Esophagus muscularis mucosa (tissue), 4 donors: ENCODE measurements at regions of chr3 and their contacts with region 1.

Region 1: DNA sequence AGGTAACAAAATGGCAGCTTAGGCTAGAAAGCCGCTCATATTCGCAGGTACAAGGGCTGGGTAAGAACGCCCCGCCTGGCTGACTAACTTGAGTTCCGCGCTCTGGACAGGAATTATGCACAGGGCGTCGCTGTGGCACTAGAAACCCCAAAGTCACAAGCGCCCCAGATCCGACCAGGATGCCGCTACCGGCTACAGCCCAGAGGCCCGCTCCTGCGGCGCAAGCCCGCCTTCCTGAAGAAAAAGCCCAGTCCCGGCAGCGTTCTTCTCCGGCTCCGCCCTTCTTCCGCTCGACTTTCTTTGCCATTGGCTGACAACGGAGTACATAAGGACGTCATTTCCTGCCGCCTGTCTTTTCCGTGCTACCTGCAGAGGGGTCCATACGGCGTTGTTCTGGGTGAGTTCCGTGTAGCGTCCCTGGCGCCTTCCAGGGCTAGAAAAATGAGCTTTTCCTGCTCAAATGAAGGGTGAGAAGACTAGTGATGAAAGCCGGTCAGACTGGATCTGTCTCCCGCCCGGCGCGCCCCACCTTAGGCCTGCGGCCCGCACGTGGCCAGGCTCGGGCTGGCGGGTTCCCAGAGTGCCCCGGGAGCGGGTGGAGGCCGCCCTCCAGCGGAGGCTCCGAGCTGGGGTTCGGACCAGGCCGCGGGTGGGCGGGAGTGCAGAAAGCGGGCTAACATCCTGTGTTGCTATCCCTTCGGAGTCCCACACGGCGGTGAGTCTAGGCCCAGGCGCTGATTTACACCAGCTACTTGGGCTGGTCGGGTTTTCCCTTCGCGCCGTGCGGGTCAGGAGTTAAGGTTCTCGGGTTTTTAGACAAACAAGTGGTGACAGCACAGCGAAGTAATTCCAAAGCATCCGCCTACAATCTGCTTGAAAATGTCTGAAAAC is at the start of gene RPSA:
- DNase-seq: peak; percentile 98
- H3K4me3 ChIP-seq: peak within 1 kb of the TSS; percentile 65 to 77 (median 73)
- H3K27ac ChIP-seq: peak within 1 kb of the TSS; percentile 78 to 88 (median 82)
- H3K4me1 ChIP-seq: peaks cover 24 to 35% (median 32%) of the 10 kb centered on the region in 4 donors
- H3K27me3 ChIP-seq: no peaks in the 10 kb centered on the region
- CTCF ChIP-seq: peak; percentile 37 to 59 (median 49)
- EP300 ChIP-seq: no peak
- POLR2A ChIP-seq: peak; percentile 90
- total RNA-seq, gene RPSA: 720 to 1,054 (median 915) TPM

Region 2: GRCh38 chr3:39383881-39384664 is 22.5 kb before region 1 on chr3:
- intact Hi-C with region 1: loop called (anchors 1 kb)
- DNase-seq: peak; percentile 98
- H3K4me3 ChIP-seq: peak overlapping the region; percentile 76 to 90 (median 86)
- H3K27ac ChIP-seq: peak overlapping the region; percentile 93 to 99 (median 95)
- H3K4me1 ChIP-seq: peaks cover 16 to 45% (median 31%) of the 10 kb centered on the region in 4 donors
- H3K27me3 ChIP-seq: no peaks in the 10 kb centered on the region
- CTCF ChIP-seq: peak in 2 of 3 experiments; percentile 15 to 36
- EP300 ChIP-seq: no peak
- POLR2A ChIP-seq: peak; percentile 29

Region 3: DNA sequence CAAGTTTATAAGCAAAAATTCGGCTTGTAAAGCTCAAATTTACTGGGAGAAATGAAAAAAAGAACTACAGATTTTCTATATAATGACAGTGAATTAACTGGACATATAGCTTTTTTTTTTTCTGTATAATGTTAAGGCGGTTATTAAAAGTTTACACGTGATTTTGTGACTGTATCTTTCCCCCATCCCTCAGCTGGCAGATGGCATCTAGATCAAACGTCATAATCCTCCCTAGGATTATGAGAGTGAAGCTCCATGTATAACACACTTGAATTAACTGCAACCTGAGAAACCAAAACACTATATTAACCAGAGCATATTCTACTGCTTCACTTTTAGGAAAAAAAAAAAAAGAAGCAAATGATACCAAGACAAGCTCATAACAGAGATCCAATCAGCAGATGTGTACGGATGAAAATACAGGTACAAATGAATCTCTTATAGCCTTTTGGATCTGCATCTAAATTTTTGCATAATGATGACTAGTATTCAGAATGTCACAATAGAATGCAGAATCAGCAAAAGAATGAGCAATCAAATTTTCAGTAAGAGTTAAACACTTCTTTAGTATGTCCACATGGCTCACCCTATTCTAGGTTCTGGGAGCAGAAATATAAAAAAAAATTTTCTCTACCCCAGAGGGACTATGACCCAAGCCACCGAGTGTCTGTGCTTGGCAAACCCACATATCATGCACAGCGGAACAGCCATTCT is 73.2 kb after region 1 on chr3:
- intact Hi-C with region 1: no loop called
- DNase-seq: no peak
- H3K4me3 ChIP-seq: no peak overlapping the region
- H3K27ac ChIP-seq: no peak overlapping the region
- H3K4me1 ChIP-seq: no peaks in the 10 kb centered on the region
- H3K27me3 ChIP-seq: no peaks in the 10 kb centered on the region
- CTCF ChIP-seq: no peak
- EP300 ChIP-seq: no peak
- POLR2A ChIP-seq: no peak